ENCODE measurements at regions of chr10 and their contacts with region 1.

Region 1: GRCh38 chr10:92087750-92088395 is 164.3 kb downstream of the BTAF1 start:
- DNase-seq: peak in 1 of 2 donors; percentile 56
- H3K4me3 ChIP-seq: no peak overlapping the region
- CTCF ChIP-seq: no peak
- POLR2A ChIP-seq: no peak

Region 2: DNA sequence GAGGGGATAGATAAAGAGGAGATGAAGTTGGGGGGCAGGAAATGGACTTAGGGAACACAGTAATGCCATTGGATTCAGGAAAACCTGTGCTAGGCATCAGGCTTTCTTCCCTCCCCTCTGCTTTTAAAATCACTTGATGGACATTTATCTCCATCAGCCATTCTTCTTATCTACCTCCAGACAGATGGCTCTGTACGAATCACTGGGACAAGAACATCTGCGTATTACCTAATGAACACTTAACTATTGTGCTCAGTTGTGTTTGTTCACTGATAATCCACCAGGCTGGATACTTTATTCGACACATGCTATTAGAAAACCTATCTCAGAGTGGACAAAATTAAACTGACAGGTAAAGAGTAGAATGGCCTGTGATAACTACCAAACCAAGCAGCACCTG is 249.7 kb before region 1 on chr10:
- intact Hi-C with region 1: no loop called
- DNase-seq: no peak
- H3K4me3 ChIP-seq: no peak overlapping the region
- CTCF ChIP-seq: no peak
- POLR2A ChIP-seq: no peak

Region 3: GRCh38 chr10:92045641-92046106 is 42.2 kb before region 1 on chr10:
- intact Hi-C with region 1: no loop called
- DNase-seq: no peak
- H3K4me3 ChIP-seq: no peak overlapping the region
- CTCF ChIP-seq: no peak
- POLR2A ChIP-seq: no peak

Region 4: DNA sequence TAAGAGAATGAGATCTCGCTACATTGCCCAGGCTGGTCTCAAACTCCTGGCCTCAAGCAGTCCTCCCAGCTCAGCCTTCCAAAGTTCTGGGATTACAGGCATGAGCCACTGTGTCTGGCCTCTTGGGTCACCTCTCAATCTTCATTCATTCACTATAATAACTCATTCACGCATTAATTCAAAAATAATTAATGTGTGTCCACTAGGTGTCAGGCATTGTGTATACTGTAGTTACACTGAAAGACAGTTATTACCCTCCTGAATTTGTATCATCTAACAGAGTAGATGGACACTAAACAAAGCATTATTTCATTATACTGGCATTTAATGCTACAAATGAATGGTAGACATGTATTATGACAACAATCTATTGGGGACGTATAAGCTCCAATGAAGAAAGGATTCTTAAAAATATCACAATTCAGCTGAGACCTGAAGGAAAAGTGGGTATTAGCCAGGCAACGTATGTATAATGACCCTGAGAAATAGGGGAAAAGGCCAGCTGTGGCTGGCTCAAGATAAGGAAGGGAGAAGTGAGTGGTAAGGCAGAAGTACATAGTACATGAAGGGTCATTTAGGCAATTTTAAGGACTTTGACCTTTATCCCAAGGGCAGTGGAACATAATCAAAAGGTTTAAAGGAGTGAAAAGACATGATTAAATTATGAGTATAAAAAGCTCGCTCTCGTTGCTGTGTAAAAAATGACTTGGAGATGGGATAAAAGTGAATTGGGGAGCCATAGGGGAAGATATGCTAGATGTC is 13.6 kb before region 1 on chr10:
- intact Hi-C with region 1: no loop called
- DNase-seq: no peak
- H3K4me3 ChIP-seq: no peak overlapping the region
- CTCF ChIP-seq: no peak
- POLR2A ChIP-seq: no peak

Region 5: DNA sequence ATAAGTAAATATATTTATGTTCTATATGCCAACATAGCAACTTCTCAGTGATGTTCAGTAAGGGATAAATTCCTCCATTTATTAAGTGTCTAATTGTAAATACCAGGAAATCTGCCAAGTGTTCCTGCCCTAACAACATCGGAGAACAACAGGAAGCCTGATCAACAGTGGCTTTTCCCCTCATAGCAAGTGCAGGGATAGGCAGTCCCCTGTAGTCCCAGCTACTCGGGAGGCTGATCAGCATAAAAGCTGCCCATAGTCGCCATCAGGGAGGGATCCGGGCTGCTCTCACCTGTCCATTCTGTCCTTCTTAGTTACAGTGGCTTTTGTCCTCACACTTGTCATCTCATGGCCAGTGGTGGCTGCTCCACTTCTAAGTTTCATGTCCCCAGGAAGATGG is 344.7 kb after region 1 on chr10:
- intact Hi-C with region 1: loop called (anchors 5 kb)
- DNase-seq: peak in 1 of 2 donors; percentile 29
- H3K4me3 ChIP-seq: no peak overlapping the region
- CTCF ChIP-seq: no peak
- POLR2A ChIP-seq: no peak

Region 6: DNA sequence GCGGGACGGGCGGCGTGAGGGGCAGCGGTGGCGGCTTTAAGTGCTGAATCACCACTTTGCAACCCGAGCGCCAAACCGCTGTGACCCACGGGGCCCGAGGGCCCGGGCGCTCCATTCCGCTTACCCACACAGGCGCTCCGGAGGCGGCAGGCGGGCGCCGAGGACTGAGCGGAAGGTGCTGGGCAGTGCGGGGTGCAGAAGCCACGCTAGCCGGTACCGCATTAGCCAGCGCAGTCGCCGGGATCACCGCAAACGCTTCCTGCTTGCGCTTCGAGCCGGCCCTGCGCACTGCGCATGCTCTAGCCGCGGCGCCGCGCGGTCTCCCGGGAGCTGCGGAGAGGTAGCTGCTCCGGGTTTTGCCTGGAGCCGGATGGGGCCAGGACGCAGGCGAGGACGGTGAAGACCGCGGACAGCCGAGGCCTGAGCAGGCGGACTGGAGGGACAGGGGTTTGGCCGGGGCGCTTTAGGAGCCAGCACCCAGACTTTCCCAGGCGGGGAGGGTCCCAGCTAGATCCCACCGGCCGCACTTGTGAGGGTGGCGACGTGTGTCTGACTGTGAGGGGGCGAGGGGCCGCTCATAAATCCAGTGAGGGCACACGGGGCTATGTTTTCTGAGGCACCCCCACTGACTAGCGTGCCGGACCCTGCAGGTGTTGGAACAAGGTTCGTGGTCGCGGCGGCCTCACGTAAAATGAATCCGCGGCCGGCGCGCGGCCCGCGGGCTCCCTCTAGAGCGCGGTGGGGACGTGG is 486.1 kb after region 1 on chr10 and contains the start of gene IDE:
- intact Hi-C with region 1: loop called (anchors 10 kb)
- DNase-seq: peak; percentile 69 to 96
- H3K4me3 ChIP-seq: peak within 1 kb of the TSS; percentile 84
- CTCF ChIP-seq: peak in 1 of 3 donors; percentile 45
- POLR2A ChIP-seq: no peak
- total RNA-seq, gene IDE: 189 to 443 (median 287) TPM